ENCODE measurements at regions of chr1 and their contacts with region 1.

Region 1: DNA sequence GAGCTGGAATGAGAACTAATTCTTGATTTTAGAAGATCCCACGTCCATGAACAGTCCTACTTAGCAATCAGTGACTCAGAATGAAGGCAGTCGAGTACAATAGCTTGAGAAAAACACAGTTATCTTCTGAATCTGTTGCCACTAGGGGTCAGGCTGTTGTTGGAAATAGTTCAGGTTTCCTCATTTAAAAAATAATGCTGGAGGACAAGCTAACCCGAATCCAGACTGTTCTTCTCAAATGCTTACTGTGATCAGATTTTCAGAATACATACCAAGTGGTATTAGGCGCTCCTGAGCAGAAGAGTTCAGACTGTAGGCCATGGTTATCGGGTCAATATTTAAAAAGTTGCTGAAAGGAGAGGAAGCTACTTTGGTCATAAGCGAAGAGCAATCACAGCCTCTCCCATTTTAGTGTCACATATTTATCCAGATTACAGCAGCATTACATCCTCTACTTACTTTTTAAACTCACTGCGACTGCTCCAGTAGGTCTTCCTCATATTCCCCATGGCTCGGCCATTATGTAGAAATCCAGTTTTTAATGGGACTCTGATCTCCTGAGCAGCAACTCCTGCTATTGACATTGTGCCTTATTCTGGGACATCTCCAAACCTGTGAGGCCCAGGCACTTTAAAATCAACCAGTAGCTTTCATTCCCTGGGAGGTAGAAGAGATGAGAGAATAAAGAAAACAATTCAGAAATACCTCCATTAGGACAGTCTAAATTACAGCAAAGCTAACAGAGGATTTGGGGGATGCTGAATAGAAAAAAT is 10.9 kb downstream of the ERRFI1 start:
- DNase-seq: peak; percentile 74
- H3K4me3 ChIP-seq: no peak overlapping the region
- H3K27ac ChIP-seq: peak overlapping the region; percentile 61
- H3K4me1 ChIP-seq: peaks cover 9% of the 10 kb centered on the region
- H3K27me3 ChIP-seq: no peaks in the 10 kb centered on the region
- CTCF ChIP-seq: peak; percentile 61

Region 2: GRCh38 chr1:7847599-7847998 is 167.6 kb before region 1 on chr1:
- intact Hi-C with region 1: no loop called
- DNase-seq: no peak
- H3K4me3 ChIP-seq: no peak overlapping the region
- H3K27ac ChIP-seq: no peak overlapping the region
- H3K4me1 ChIP-seq: no peaks in the 10 kb centered on the region
- H3K27me3 ChIP-seq: no peaks in the 10 kb centered on the region
- CTCF ChIP-seq: no peak

Region 3: GRCh38 chr1:7857985-7858384 is 157.2 kb before region 1 on chr1:
- intact Hi-C with region 1: no loop called
- DNase-seq: no peak
- H3K4me3 ChIP-seq: no peak overlapping the region
- H3K27ac ChIP-seq: no peak overlapping the region
- H3K4me1 ChIP-seq: no peaks in the 10 kb centered on the region
- H3K27me3 ChIP-seq: no peaks in the 10 kb centered on the region
- CTCF ChIP-seq: no peak

Region 4: DNA sequence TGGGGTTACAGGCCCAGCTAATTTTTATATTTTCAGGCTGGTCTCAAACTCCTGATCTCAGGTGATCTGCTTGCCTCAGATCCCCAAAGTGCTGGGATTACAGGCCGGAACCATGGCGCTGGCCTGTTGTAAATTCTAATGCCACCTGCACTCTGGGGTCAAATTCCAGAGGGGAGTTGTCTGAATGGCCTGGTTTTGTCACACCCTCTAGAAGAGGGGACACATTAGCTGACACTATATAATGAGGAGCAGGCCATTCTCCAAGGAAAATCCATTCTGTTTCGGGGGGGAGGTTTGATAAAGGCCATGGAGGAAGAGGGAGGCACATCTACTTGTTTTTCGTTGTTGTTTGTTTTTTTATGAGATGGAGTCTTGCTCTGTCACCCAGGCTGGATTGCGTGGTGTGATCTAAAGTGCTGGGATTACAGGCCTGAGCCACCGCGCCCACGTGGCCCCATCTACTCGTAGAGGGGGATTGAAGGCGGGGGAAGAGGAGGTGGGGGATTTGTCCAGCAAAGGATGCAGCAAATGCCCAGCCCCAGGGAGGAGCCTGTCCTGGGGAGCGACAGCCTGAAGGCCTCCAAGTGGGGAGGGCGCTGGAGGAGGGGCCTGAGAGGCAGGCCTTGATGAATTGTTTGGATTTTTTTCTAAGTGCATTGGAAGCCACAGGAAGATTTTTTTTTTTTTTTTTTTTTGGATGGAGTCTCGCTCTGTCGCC is 224.2 kb after region 1 on chr1:
- intact Hi-C with region 1: loop called (anchors 5 kb)
- DNase-seq: peak; percentile 80
- H3K4me3 ChIP-seq: no peak overlapping the region
- H3K27ac ChIP-seq: peak overlapping the region; percentile 80
- H3K4me1 ChIP-seq: peaks cover 9% of the 10 kb centered on the region
- H3K27me3 ChIP-seq: no peaks in the 10 kb centered on the region
- CTCF ChIP-seq: no peak